ENCODE measurements at regions of chr3 and their contacts with region 1.

Region 1: GRCh38 chr3:113287803-113288648 is 76.7 kb downstream of the BOC start:
- DNase-seq: peak; percentile 64
- H3K4me3 ChIP-seq: no peak overlapping the region
- H3K27ac ChIP-seq: peak overlapping the region in 1 of 3 donors; percentile 5
- H3K4me1 ChIP-seq: peaks cover 0 to 11% of the 10 kb centered on the region in 2 donors
- H3K27me3 ChIP-seq: no peaks in the 10 kb centered on the region
- CTCF ChIP-seq: peak; percentile 98 to 100 (median 99)
- POLR2A ChIP-seq: no peak

Region 2: GRCh38 chr3:113051302-113051711 is 236.7 kb before region 1 on chr3:
- intact Hi-C with region 1: loop called (anchors 5 kb)
- DNase-seq: peak; percentile 86 to 87
- H3K4me3 ChIP-seq: no peak overlapping the region
- H3K27ac ChIP-seq: peak overlapping the region; percentile 19 to 67 (median 62)
- H3K4me1 ChIP-seq: peaks cover 3 to 20% of the 10 kb centered on the region in 2 donors
- H3K27me3 ChIP-seq: no peaks in the 10 kb centered on the region
- CTCF ChIP-seq: peak; percentile 82 to 98 (median 92)
- POLR2A ChIP-seq: no peak

Region 3: GRCh38 chr3:113084777-113085176 is 203.2 kb before region 1 on chr3:
- intact Hi-C with region 1: no loop called
- DNase-seq: no peak
- H3K4me3 ChIP-seq: no peak overlapping the region
- H3K27ac ChIP-seq: no peak overlapping the region
- H3K4me1 ChIP-seq: no peaks in the 10 kb centered on the region
- H3K27me3 ChIP-seq: no peaks in the 10 kb centered on the region
- CTCF ChIP-seq: no peak
- POLR2A ChIP-seq: no peak

Measured in thyroid gland (tissue), 4 donors.